Right ventricle myocardium inferior (tissue), 1 donor: ENCODE measurements at regions of chr20 and their contacts with region 1.

Region 1: GRCh38 chr20:23200918-23201317 is 114.8 kb upstream of the CD93 start:
- DNase-seq: no peak
- ATAC-seq: peak; percentile 20

Region 2: GRCh38 chr20:22248051-22248667 is 952.8 kb before region 1 on chr20:
- intact Hi-C with region 1: no loop called
- DNase-seq: no peak
- ATAC-seq: no peak

Region 3: DNA sequence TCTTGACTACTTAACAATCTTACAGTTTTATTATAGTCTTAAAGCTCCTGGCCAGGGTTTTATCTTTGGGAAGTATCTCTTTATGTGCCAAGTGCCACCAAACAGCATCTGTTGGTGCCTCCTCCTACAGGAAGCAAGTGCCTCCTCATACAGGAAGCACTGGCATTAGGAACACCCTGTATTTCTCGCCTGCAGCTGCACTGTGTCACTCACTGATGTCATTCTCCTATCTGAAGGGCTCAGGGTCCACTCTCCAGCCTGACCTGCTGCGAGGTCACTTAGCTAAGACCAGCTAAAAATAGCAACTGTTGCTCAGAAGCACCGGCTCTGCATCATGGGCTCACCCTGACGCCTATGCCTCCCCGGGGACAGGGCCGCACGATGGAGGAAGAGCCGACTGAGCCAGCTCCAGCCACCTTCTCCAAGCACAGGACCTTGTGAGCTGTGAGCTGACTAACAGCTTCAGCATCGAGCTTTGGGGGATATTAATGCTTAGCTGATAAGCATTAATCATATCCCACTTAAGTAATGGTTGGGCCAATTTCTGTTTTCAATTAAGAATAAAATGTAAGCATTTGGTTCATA is 48.5 kb before region 1 on chr20:
- intact Hi-C with region 1: loop called (anchors 5 kb)
- DNase-seq: peak; percentile 85
- ATAC-seq: peak; percentile 95

Region 4: DNA sequence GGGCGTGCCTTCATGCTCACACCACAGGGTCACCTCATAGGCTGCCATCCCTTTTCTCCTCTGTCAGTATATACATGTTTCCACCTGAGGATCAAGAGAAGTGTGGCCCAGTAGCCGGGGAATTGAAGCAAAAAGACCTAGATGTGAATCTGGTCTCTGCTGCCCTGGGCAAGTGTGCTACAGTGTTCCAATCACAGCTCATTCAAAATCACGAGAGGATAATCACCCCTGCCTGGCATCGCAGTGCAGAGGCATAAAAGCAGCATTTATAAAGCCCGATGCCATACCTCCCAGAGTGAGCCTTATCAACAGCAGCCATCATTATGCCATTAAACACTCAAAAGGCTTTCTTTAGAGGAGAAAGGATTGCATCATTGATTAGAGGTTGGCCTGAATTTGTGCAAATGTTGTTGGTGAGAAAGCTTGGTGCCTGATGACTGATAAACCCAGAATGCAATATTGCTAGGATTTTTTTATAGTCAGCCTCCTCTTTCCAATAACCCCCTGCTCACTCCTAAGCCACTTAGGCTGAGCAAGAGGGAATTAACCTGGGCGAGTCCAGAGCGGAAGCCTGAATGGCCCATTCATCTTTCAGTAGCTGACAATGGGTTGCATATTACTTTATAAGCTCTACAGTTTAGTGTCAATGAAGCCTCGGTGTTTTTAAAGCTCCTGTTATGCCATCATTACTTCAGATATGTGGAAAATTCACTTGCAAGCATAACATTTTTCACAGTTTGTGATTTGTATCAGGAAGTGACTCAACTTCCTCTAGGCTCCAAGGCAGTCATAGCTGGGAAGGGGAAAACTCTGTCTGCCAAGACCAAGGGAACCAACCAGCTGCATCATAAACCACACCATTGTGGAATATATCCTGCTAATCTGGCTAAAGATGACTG is 57.2 kb after region 1 on chr20:
- intact Hi-C with region 1: no loop called
- DNase-seq: no peak
- ATAC-seq: peak; percentile 44